ENCODE measurements at regions of chr2 and their contacts with region 1.

Region 1: GRCh38 chr2:42086500-42086953 is 38.7 kb downstream of the PKDCC start:
- DNase-seq: peak; percentile 75
- H3K4me3 ChIP-seq: no peak overlapping the region
- CTCF ChIP-seq: peak; percentile 66

Region 2: DNA sequence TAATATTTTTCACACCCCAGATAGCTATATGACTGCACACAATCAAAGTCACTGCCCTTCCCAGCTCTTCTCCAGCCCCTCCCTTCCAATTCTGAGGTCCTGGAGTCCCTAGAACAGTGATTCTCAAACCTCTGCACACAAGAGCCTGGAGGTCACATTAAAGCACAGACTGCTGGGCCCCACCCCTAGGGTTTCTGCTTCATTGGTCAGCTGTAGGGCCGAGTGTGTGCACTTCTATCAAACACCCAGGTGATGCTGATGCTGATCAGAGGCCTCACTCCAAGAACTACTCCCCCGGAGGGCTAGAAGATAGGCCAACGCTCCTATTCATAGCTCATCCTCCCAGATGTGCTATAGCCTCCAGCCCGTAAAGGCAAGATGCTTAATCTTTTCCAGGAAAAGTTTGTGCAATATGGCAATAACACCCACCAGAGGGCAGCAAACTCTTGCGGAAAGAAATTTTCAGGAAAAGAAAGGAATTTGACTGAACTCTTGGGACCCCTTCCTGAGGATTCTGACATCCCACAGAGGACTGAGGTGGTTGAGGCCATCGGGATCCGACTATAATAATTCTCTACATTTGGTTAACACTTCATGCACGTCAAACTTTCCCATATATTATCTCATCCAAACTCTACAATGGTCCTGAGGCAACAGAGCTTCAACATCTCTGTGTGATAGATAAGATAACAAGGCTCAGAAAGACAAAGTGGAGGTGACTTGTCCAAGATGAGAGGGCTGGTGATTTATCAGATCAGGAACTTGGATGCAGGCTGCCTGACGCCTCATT is 232.9 kb before region 1 on chr2:
- in situ Hi-C with region 1: loop called (anchors 10 kb)
- DNase-seq: peak; percentile 58
- H3K4me3 ChIP-seq: no peak overlapping the region
- CTCF ChIP-seq: peak; percentile 77

Region 3: GRCh38 chr2:42372474-42373200 is 286.1 kb after region 1 on chr2:
- in situ Hi-C with region 1: no loop called
- DNase-seq: no peak
- H3K4me3 ChIP-seq: no peak overlapping the region
- CTCF ChIP-seq: no peak